ENCODE measurements at regions of chr4 and their contacts with region 1.

Region 1: GRCh38 chr4:73573794-73574406 is 46.3 kb downstream of the RASSF6 start:
- DNase-seq: peak; percentile 17
- ATAC-seq: peak; percentile 66
- H3K4me3 Mint-ChIP-seq: no peak overlapping the region
- H3K27ac Mint-ChIP-seq: no peak overlapping the region
- H3K4me1 Mint-ChIP-seq: no peaks in the 10 kb centered on the region
- H3K27me3 Mint-ChIP-seq: peaks cover 3% of the 10 kb centered on the region
- CTCF ChIP-seq: no peak

Region 2: GRCh38 chr4:73311428-73311827 is 262.5 kb before region 1 on chr4:
- CTCF ChIA-PET with region 1: interaction called, 4 read pairs
- POLR2A ChIA-PET with region 1: no interaction called
- intact Hi-C with region 1: loop called (anchors 2 kb)
- DNase-seq: no peak
- ATAC-seq: no peak
- H3K4me3 Mint-ChIP-seq: no peak overlapping the region
- H3K27ac Mint-ChIP-seq: no peak overlapping the region
- H3K4me1 Mint-ChIP-seq: no peaks in the 10 kb centered on the region
- H3K27me3 Mint-ChIP-seq: no peaks in the 10 kb centered on the region
- CTCF ChIP-seq: no peak

Region 3: DNA sequence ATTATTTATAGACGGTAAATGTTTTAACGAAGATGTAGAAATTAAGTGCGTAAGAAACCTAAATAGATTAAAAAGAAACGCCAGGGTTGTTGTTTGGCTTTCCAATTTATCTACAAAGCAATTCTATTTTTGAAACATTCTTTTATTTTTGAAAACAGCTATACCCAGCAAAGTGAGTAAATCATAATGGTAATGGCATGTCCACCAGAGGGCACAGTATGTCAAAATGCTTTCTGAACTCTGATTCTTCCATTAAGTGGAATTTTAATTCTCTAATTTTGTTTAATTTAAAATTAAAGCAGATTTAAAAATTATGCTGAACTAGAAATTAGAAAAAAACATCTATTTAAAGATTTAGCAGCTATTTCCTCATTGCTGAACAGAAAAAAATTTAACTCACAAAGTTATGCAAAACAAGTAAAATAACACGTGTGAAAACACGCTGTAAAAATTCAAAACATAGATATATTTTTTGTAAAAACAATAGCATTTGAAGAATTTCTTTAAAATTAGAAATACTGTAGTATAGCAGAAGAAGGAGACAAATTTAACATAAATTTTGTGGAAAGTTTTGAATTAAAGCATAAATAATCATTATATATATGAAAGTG is 19.8 kb after region 1 on chr4:
- CTCF ChIA-PET with region 1: interaction called, 9 read pairs
- POLR2A ChIA-PET with region 1: interaction called, 4 read pairs
- intact Hi-C with region 1: loop called (anchors 1 kb)
- DNase-seq: no peak
- ATAC-seq: no peak
- H3K4me3 Mint-ChIP-seq: no peak overlapping the region
- H3K27ac Mint-ChIP-seq: no peak overlapping the region
- H3K4me1 Mint-ChIP-seq: peaks cover 34% of the 10 kb centered on the region
- H3K27me3 Mint-ChIP-seq: no peaks in the 10 kb centered on the region
- CTCF ChIP-seq: no peak